Right cardiac atrium (tissue), 5 donors: ENCODE measurements at regions of chr1 and their contacts with region 1.

Region 1: GRCh38 chr1:223074445-223075300 is 68.4 kb downstream of the TLR5 start:
- DNase-seq: no peak
- ATAC-seq: peak; percentile 49 to 52
- H3K4me3 ChIP-seq: no peak overlapping the region
- H3K27ac ChIP-seq: peak overlapping the region; percentile 63
- H3K4me1 ChIP-seq: peaks cover 8% of the 10 kb centered on the region
- H3K27me3 ChIP-seq: no peaks in the 10 kb centered on the region

Region 2: GRCh38 chr1:222931023-222931422 is 143.7 kb before region 1 on chr1:
- intact Hi-C with region 1: loop called in 1 of 4 experiments (anchors 10 kb)
- DNase-seq: no peak
- ATAC-seq: no peak
- H3K4me3 ChIP-seq: peak overlapping the region; percentile 10
- H3K27ac ChIP-seq: no peak overlapping the region
- H3K4me1 ChIP-seq: peaks cover 1% of the 10 kb centered on the region
- H3K27me3 ChIP-seq: no peaks in the 10 kb centered on the region